Activated CD4-positive, alpha-beta T cell treated with anti-CD3 and anti-CD28 coated beads for 36 hours (primary cell): ENCODE measurements at regions of chr1 and their contacts with region 1.

Region 1: DNA sequence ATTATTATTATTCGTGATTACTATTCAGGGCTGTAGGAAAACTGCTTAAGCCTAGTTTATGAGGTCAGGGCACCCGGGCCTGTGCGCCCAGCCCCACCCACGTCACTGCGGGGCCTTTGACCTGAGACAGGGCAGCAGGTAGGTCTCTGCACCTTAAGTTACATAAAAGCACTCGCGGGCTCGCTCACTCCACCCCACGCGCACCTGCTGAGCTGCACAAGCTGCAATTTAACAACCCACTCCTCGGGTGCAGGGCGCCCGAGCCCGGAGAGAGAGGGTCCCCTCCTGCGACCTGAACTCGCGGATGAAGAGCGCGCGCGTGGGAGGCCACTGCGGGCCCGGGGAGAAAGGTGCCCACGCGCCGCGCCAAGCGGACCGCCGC is 477 bp downstream of the ICMT start:
- DNase-seq: no peak
- ATAC-seq: peak; percentile 7
- H3K4me3 Mint-ChIP-seq: peak overlapping the region; percentile 88
- H3K27ac Mint-ChIP-seq: peak overlapping the region; percentile 78
- H3K4me1 Mint-ChIP-seq: peaks cover 12% of the 10 kb centered on the region
- H3K27me3 Mint-ChIP-seq: peaks cover 11% of the 10 kb centered on the region

Region 2: DNA sequence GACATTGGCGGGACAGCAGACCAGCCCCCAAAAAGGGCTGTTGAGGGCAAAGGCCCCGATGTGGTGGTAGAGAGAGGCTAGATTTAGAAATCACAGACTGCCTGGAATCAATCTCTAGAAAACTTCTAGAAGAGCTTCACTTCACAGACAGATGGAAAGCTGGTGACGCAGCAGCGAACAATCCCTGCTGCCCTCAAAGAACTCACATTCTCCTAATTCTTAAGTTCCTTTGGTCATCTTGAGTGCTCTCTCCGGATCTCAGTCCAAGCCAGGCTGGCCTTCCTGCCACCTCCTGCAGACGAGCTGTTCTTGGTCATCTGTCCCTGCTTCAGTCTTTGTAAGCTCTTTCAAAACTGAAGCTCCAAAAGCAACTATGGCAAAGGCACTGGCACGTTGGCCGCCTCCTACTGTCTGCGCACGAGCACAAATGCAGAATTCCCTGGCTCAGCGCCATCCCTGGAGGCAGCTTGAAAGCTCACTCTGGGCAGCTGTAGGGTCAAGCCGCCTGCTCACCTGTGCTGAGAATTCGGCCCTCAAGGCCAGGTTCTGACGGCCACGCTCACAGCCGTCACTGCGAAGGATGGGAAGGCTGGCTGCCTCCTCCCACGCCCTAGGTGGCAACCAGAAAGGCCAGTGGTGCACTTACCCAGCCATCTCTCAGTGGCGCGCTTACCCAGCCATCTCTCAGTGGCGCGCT is 353.6 kb before region 1 on chr1:
- CTCF ChIA-PET with region 1: no interaction called
- POLR2A ChIA-PET with region 1: no interaction called
- intact Hi-C with region 1: no loop called
- DNase-seq: no peak
- ATAC-seq: no peak
- H3K4me3 Mint-ChIP-seq: no peak overlapping the region
- H3K27ac Mint-ChIP-seq: no peak overlapping the region
- H3K4me1 Mint-ChIP-seq: no peaks in the 10 kb centered on the region
- H3K27me3 Mint-ChIP-seq: no peaks in the 10 kb centered on the region

Region 3: DNA sequence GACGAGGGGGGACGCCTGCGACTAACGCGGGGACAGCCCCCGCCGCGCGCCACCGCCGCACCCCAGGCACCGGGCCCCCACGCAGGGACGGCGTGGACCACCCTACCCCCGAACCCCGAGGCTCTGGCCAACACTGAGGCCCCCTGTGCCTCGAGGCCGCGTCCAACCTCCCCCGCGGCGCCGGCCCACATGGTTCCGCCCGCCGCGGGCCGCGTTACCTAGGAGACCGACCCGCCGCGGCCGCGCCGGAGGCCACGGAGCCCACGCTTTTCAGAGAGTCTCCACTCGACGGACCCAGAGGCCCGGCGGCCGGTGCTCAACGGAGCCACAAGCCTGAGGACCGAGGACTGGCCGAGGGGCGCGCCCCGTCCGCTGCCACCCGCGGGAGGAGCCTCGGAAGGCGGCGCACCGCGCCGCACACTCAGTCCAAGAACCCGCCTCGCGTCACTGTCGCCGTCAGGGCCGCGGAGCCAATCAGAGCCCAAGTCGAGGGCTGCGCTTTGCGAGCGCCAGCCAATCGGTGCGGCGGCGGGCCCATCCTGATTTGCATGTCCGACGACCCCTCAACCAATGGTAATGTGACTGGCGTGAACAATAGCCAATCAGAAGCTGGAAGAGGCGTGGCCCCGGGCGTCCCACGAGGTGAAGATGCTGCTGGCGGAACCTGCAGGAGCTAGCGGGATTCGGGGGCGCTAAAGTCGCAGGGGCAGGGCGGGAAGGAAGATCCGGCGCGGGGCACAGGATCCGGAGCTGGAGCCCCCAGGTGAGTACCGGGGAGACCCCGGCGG is 243.1 kb before region 1 on chr1 and contains the start of gene NPHP4:
- CTCF ChIA-PET with region 1: no interaction called
- POLR2A ChIA-PET with region 1: no interaction called
- intact Hi-C with region 1: loop called in 1 of 2 experiments (anchors 1 kb)
- DNase-seq: peak; percentile 100
- ATAC-seq: peak; percentile 93
- H3K4me3 Mint-ChIP-seq: peak within 1 kb of the TSS; percentile 97
- H3K27ac Mint-ChIP-seq: peak within 1 kb of the TSS; percentile 96
- H3K4me1 Mint-ChIP-seq: peaks cover 25% of the 10 kb centered on the region
- H3K27me3 Mint-ChIP-seq: no peaks in the 10 kb centered on the region
- total RNA-seq, gene NPHP4: 12.9 to 14.1 TPM

Region 4: GRCh38 chr1:6127587-6128163 is 107.6 kb before region 1 on chr1:
- CTCF ChIA-PET with region 1: no interaction called
- POLR2A ChIA-PET with region 1: no interaction called
- intact Hi-C with region 1: loop called in 1 of 2 experiments (anchors 1 kb)
- DNase-seq: peak; percentile 91
- ATAC-seq: peak; percentile 97
- H3K4me3 Mint-ChIP-seq: no peak overlapping the region
- H3K27ac Mint-ChIP-seq: no peak overlapping the region
- H3K4me1 Mint-ChIP-seq: peaks cover 5% of the 10 kb centered on the region
- H3K27me3 Mint-ChIP-seq: peaks cover 3% of the 10 kb centered on the region

Region 5: DNA sequence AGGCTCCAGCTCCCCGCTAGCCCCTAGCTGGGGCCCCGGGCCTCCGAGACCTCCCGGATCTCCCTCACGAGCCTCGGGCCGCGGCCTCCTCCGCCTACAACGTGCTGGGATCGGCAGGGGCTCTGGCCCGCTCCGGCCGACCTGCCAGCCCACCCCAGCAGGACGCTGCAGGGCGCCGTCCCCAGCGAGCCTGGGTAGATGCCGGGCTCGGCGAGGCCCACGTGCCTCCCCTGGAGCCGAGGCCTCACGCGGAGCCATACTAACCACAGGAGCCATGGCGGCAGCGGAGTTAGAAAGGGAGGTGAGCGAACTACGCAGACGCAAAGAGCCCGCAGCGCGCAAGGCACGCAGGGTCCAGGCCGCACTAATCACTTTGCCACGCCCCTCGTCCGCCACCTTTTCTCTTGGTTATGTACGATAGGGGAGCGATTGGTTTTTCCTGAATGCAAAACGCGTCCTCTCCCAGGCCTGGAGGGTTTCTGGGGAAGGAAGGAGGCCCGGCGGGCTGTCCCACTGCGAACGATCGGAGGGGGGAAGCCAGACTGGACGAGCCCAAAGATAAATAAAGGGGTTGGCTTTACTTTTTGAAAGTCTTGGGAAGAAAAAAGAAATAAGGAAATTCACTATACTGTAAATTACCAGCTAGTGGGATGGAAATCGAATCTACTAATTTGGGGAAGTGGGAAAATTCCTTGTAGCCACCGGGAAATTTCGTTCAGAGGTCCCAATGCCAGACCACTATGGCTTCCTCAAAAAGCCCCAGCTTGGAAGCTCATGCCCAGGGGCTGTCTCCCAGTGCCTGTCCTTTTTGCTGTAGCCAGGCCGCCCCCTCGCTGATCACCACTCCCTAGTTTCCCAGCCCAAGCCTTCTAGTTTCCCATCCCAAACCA is 35.7 kb before region 1 on chr1 and contains the start of gene RPL22:
- CTCF ChIA-PET with region 1: no interaction called
- POLR2A ChIA-PET with region 1: no interaction called
- intact Hi-C with region 1: loop called (anchors 1 to 2 kb)
- DNase-seq: peak; percentile 99
- ATAC-seq: peak; percentile 99
- H3K4me3 Mint-ChIP-seq: peak within 1 kb of the TSS; percentile 99
- H3K27ac Mint-ChIP-seq: peak within 1 kb of the TSS; percentile 96
- H3K4me1 Mint-ChIP-seq: peaks cover 39% of the 10 kb centered on the region
- H3K27me3 Mint-ChIP-seq: no peaks in the 10 kb centered on the region
- total RNA-seq, gene RPL22: 392 to 475 TPM

Region 6: DNA sequence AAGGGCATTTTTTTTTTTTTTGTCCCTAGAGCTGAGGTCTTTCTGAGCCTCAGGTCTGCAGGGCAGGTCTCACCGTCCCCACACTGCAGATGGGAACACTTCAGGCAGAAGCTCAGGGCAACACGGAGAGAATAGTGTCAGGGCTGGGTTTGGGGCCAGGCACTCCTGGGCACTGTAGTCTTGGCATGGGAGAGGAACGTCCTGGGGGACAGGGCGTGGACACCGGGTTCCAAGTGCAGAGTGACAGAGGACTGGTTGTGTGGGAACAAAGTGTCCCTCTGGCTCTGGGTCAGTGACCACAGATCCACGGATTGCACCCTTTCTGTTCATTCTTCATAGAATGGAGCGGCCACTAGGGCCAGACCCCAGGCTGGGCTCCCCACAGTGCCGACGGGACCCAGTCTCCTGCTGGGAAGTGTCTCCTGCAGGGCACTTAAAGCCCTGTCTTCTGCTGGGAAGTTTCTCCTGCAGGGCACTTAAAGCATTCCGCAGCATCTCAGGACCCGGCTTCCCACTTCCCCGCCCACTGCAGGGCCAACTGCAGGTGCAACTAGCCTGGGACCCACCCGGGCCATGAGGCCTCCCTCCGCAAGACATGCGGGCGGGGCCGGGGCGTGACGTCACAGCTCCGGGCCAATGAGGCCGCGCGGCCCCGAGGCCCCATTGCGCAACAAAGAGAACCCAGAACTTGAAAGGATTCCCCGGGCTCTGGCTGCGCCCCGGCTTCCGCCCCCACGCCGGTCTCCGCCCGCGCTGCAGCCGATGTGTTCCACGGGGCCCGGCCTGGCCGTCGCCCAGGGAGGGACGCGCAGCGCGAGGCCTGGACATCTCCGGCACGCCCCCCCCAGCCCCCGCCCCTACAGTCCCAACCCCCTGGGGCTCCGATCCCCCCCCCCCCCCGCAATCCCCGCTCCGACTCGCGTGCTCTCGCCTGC is 24.5 kb after region 1 on chr1:
- CTCF ChIA-PET with region 1: no interaction called
- POLR2A ChIA-PET with region 1: no interaction called
- intact Hi-C with region 1: loop called in 1 of 2 experiments (anchors 1 kb)
- DNase-seq: peak; percentile 86
- ATAC-seq: peak; percentile 53
- H3K4me3 Mint-ChIP-seq: no peak overlapping the region
- H3K27ac Mint-ChIP-seq: no peak overlapping the region
- H3K4me1 Mint-ChIP-seq: peaks cover 3% of the 10 kb centered on the region
- H3K27me3 Mint-ChIP-seq: peaks cover 3% of the 10 kb centered on the region